Right ventricle myocardium inferior (tissue), 1 donor: ENCODE measurements at regions of chr6 and their contacts with region 1.

Region 1: GRCh38 chr6:131063028-131063763 is at the start of gene EPB41L2:
- DNase-seq: peak; percentile 93
- ATAC-seq: peak; percentile 99
- total RNA-seq, gene EPB41L2: 97.2 TPM

Region 2: DNA sequence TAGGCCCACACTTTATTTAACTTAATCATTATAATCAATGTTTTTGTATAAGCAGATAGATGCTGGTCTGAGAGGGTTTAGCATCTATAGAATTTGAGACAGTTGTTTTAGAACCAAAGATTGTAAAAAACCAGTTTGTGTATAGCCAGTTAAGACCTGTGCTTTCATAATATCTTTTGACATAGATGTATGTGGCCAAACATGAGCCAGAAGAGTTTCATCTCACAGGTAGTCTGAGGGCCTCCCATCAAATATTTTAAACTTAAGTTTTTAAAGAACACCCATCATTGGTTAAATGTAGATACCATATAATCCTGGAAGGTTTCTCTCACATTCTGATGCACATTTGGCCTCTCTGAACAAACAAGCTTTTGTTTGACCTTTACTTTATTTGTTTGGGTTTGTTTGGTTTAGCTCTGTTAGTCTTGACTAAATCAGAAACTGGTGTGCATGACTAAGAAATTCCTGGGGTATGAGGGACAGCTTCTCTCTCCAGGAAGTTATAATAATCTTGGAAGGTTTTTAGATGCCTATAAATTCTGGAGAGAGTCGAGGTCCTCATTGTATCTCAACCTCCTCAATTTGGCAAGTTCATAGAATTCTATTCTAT is 755.3 kb before region 1 on chr6:
- intact Hi-C with region 1: no loop called
- DNase-seq: no peak
- ATAC-seq: no peak

Region 3: DNA sequence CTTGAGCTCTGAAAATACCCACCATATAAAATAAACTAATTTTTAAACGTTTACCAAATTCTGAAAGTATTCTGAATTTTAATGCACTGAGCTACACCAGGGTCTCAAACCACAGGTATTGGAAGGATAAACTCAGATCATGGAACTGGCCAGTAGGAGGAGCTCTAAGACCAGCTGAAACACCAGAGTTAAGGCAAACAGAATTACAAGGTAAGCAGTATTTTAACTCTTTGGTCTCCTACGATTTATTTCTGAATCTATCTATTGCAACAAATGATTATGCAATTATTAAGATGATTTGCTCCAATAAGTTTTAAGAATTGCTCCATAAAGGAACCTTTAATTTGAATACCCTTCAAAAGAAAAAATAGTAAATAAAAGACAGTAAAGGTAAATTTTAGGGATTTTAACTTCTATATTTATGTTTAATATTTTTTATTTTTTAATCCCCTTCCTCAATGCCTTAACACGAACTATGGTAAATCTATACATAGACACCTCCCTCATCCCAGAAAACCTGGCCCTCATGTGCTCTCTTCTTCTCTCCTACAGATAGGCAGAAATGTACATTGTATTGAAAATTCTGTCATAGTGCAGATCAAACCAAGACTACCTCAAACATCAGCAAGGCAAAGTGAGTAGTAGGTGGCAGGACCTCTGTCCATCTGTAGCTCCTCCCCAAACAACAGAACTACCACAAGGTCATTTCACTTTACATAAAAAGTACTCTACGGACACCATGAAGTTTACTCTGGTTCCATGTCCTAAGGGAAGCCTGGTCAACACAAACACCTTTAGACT is 177.6 kb before region 1 on chr6:
- intact Hi-C with region 1: loop called (anchors 2 kb)
- DNase-seq: no peak
- ATAC-seq: peak; percentile 85

Region 4: DNA sequence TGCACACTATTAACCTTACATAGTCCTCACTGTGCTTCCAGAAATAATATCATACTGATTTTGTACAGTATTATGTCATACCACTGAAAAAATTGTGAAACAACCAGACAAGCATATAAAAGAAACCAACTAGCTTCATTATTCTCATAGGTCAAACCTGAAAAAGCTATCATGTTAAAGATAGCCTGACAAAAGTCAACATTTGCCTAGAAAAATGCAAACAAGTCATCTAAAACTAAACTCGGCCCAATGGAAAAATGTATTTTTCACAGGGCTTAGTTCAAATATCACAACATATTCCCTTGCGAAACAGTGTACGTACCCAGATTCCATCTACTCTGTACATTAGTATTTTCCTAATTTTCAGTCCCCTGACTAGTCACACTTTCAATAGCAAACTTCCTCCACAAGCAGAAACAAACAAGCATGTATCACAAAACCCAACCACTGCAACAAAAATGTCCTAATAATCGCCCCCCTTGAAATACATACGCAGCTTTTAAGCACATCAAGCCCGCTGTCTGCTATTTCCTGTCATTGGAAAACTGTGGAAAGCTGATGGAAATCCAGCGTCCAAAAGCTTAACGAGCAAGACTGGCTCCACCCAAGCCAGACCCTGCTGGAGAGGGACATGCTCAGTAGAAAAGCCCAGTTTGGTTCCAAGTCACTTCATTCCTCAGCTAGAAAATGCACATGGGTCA is 93.3 kb before region 1 on chr6:
- intact Hi-C with region 1: loop called (anchors 5 kb)
- DNase-seq: no peak
- ATAC-seq: peak; percentile 88

Region 5: DNA sequence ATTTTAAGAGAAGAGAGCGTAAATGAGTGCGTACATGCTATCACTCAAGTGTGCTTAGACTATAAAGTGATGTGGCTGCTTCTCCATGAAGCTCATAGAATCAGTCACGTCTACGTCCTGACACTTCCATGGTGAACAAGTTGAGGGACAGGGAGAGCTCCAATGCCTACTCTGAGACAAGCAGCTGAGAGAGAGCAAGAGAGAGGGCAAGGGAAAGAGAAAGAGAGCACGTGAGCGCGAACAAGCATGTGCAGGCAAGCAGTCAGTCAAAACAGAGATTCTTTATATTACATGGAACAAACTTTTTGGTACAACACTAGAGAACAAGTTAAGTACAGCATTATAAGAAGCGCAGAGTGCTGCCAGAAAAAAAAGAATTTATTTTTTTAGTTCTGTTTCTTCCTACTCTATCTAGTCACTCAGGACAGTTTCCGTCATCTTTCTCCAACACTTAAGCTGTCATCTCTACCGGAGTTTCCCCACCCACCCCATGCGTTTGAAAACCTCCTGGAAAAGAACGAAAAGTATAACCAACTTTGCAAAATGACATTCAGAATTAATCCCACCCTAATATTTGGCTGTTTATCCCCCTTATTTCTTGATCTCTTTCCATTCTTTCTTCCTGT is 62.0 kb before region 1 on chr6:
- intact Hi-C with region 1: loop called (anchors 5 kb)
- DNase-seq: no peak
- ATAC-seq: peak; percentile 44

Region 6: DNA sequence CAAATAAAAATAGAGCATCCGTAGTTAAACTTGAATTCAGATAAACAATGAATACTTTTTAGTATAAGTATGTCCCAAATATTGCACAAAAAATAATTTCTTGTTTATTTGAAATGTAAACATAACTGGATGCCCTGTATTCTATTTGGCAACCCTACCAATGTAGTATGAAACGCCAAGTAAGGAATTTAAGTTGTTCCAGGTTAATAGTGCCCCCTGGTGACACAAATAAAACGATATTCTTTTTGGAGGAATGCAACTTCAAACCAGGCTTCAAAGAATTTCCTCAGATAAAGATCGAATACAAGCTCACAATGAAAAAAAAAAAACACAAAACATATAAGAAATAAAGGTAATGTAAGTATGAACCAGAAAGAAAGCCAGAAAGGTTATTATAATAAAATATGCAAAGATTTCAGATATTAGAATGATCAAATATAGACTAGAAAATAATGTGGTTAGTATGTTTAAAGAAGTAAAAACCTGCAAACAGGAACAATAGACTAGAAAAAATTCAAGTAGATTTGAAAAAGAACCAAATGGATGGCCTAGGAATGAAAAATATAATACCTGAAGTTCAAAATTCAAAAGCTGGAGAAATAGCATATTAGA is 53.7 kb after region 1 on chr6:
- intact Hi-C with region 1: loop called (anchors 10 kb)
- DNase-seq: no peak
- ATAC-seq: no peak

Region 7: DNA sequence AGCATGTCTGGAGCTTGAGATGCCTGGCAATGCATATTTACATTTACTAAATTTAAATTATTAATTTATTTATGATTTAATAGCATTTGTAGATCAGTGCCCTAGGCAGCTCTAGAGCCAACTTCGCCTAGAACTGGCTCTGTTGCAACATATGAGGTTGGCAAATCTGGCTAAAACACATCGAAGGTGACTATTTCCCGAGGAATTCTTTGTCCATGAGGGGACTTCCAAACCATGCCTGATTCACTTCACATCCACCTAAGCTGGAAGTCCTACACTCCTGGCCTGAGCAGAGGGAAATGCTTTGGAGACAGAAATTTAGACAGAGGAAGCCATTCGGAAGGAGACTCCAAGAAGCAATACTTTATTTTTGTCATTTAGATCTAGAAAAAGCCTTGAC is 298.9 kb after region 1 on chr6:
- intact Hi-C with region 1: no loop called
- DNase-seq: no peak
- ATAC-seq: no peak